Endothelial cell of umbilical vein (primary cell): ENCODE measurements at regions of chr12 and their contacts with region 1.

Region 1: DNA sequence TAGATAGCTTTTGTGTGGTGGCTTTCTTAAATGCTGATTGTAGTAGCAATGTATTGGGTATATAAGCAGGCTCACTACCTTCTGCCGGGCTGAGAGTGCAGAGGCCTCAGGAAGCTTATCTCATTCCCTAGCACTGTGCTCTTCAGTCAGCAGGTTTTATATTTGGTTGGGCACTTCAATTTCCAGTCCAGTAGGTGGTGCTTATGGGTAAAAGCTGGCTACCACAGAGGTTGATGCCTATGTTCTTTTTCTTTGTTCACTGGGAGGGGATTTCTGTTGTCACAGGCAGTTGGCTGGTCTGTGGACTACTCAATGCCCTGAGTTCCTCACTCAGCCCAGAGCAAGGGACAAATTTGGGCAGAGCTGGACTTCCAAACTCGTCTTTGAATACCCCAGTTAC is 43.0 kb upstream of the GLIPR1 start:
- DNase-seq: peak; percentile 42
- H3K4me3 ChIP-seq: no peak overlapping the region
- H3K27ac ChIP-seq: no peak overlapping the region
- H3K4me1 ChIP-seq: no peaks in the 10 kb centered on the region
- H3K27me3 ChIP-seq: no peaks in the 10 kb centered on the region
- CTCF ChIP-seq: peak; percentile 16 to 39
- POLR2A ChIP-seq: no peak

Region 2: DNA sequence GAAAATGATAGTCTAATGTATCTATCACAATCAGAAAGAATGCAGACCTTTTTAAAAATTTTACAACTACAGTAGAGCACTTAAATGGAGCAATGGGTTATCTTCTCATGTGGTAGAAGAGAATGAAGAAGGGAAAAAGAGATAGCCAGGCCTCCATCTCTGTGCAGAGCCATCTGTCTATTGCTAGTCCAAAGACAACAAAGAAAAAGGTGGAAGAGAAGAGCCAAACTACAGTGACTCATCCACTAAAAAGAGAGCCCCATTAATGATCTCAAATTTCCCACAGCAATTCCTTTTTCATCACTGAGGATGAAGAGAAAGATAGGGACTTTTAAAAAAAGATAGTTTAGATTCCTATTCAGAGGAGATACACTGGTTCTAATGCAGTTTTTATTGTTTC is 667.0 kb before region 1 on chr12:
- CTCF ChIA-PET with region 1: no interaction called
- POLR2A ChIA-PET with region 1: no interaction called
- dilution Hi-C with region 1: no loop called
- intact Hi-C with region 1: no loop called
- DNase-seq: no peak
- H3K4me3 ChIP-seq: no peak overlapping the region
- H3K27ac ChIP-seq: no peak overlapping the region
- H3K4me1 ChIP-seq: no peaks in the 10 kb centered on the region
- H3K27me3 ChIP-seq: no peaks in the 10 kb centered on the region
- CTCF ChIP-seq: no peak
- POLR2A ChIP-seq: no peak

Region 3: DNA sequence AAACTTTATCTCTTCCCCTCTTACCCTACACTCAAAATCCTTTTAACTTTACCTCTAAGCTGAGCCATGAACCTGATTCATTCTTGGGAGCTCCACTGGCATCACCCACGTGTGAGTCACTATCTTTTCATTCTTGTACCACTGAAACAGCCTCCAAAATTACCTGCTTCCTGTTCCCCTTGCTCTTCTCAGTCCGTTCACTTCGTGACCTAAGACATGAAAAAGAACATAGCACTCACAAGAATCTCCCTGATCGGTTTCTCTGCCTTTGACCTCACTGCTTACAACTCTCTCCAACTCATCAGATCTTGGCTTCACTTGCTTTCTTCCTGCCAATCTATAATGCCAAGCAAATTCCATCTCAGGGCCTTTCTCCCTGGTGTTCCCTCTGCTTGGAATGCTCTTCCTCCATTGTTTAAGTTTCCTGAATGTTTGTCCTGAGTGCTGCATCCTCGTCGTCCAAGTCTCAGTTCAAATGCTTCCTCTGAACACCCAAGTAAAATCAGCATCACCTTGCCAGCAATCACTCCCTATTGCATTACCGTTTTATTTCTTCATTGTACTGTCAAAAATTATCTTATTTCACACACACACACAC is 52.1 kb after region 1 on chr12:
- CTCF ChIA-PET with region 1: interaction called, 17 read pairs
- POLR2A ChIA-PET with region 1: no interaction called
- dilution Hi-C with region 1: no loop called
- intact Hi-C with region 1: loop called (anchors 2 kb)
- DNase-seq: peak; percentile 52
- H3K4me3 ChIP-seq: no peak overlapping the region
- H3K27ac ChIP-seq: peak overlapping the region; percentile 28
- H3K4me1 ChIP-seq: peaks cover 14% of the 10 kb centered on the region
- H3K27me3 ChIP-seq: no peaks in the 10 kb centered on the region
- CTCF ChIP-seq: no peak
- POLR2A ChIP-seq: no peak

Region 4: GRCh38 chr12:75505706-75506312 is 68.2 kb after region 1 on chr12:
- CTCF ChIA-PET with region 1: interaction called, 3 read pairs
- POLR2A ChIA-PET with region 1: no interaction called
- dilution Hi-C with region 1: no loop called
- intact Hi-C with region 1: loop called (anchors 1 kb)
- DNase-seq: peak; percentile 60
- H3K4me3 ChIP-seq: no peak overlapping the region
- H3K27ac ChIP-seq: no peak overlapping the region
- H3K4me1 ChIP-seq: peaks cover 8% of the 10 kb centered on the region
- H3K27me3 ChIP-seq: no peaks in the 10 kb centered on the region
- CTCF ChIP-seq: peak; percentile 32 to 50
- POLR2A ChIP-seq: peak; percentile 38